Naive thymus-derived CD4-positive, alpha-beta T cell (primary cell): ENCODE measurements at regions of chr7 and their contacts with region 1.

Region 1: GRCh38 chr7:92447345-92448204 is at the start of gene GATAD1:
- DNase-seq: peak in 7 of 9 donors; percentile 64 to 87 (median 84)
- ATAC-seq: peak; percentile 89
- H3K4me3 ChIP-seq: peak within 1 kb of the TSS; percentile 63
- H3K4me3 Mint-ChIP-seq: peak within 1 kb of the TSS; percentile 81 to 97 (median 93)
- H3K27ac ChIP-seq: peak within 1 kb of the TSS; percentile 95
- H3K27ac Mint-ChIP-seq: peak within 1 kb of the TSS; percentile 95 to 99 (median 98)
- H3K4me1 ChIP-seq: peaks cover 9 to 14% of the 10 kb centered on the region in 2 donors
- H3K4me1 Mint-ChIP-seq: peaks cover 6 to 38% (median 17%) of the 10 kb centered on the region in 7 donors
- H3K27me3 ChIP-seq: no peaks in the 10 kb centered on the region
- H3K27me3 Mint-ChIP-seq: peaks cover 0 to 3% (median 0%) of the 10 kb centered on the region in 5 donors
- total RNA-seq, gene GATAD1: 16.4 to 34.7 (median 22.7) TPM

Region 2: GRCh38 chr7:91089382-91089963 is 1358.1 kb before region 1 on chr7:
- CTCF ChIA-PET with region 1: no interaction called
- POLR2A ChIA-PET with region 1: no interaction called
- intact Hi-C with region 1: loop called (anchors 5 kb)
- DNase-seq: peak in 6 of 9 donors; percentile 33 to 52 (median 38)
- ATAC-seq: peak; percentile 78
- H3K4me3 ChIP-seq: no peak overlapping the region
- H3K4me3 Mint-ChIP-seq: peak overlapping the region; percentile 2 to 71 (median 43)
- H3K27ac ChIP-seq: no peak overlapping the region
- H3K27ac Mint-ChIP-seq: peak overlapping the region in 4 of 9 donors; percentile 0 to 29 (median 12)
- H3K4me1 ChIP-seq: peaks cover 0 to 12% of the 10 kb centered on the region in 2 donors
- H3K4me1 Mint-ChIP-seq: peaks cover 14 to 36% (median 29%) of the 10 kb centered on the region in 7 donors
- H3K27me3 ChIP-seq: no peaks in the 10 kb centered on the region
- H3K27me3 Mint-ChIP-seq: peaks cover 0 to 9% (median 0%) of the 10 kb centered on the region in 5 donors

Region 3: GRCh38 chr7:91826377-91826776 is 621.2 kb before region 1 on chr7:
- CTCF ChIA-PET with region 1: interaction called, 3 read pairs
- POLR2A ChIA-PET with region 1: no interaction called
- intact Hi-C with region 1: loop called in 1 of 2 experiments (anchors 1 kb)
- DNase-seq: no peak
- ATAC-seq: no peak
- H3K4me3 ChIP-seq: no peak overlapping the region
- H3K4me3 Mint-ChIP-seq: no peak overlapping the region
- H3K27ac ChIP-seq: no peak overlapping the region
- H3K27ac Mint-ChIP-seq: no peak overlapping the region
- H3K4me1 ChIP-seq: no peaks in the 10 kb centered on the region
- H3K4me1 Mint-ChIP-seq: no peaks in the 10 kb centered on the region
- H3K27me3 ChIP-seq: no peaks in the 10 kb centered on the region
- H3K27me3 Mint-ChIP-seq: peaks cover 0 to 6% (median 0%) of the 10 kb centered on the region in 5 donors

Region 4: GRCh38 chr7:92134271-92135051 is 313.1 kb before region 1 on chr7 and contains the start of gene CYP51A1:
- CTCF ChIA-PET with region 1: no interaction called
- POLR2A ChIA-PET with region 1: interaction called, 6 read pairs
- intact Hi-C with region 1: loop called (anchors 1 kb)
- DNase-seq: peak; percentile 93 to 98 (median 96)
- ATAC-seq: peak; percentile 93
- H3K4me3 ChIP-seq: peak within 1 kb of the TSS; percentile 92
- H3K4me3 Mint-ChIP-seq: peak within 1 kb of the TSS; percentile 95 to 100 (median 98)
- H3K27ac ChIP-seq: peak within 1 kb of the TSS; percentile 94
- H3K27ac Mint-ChIP-seq: peak within 1 kb of the TSS; percentile 89 to 100 (median 99)
- H3K4me1 ChIP-seq: peaks cover 4 to 12% of the 10 kb centered on the region in 2 donors
- H3K4me1 Mint-ChIP-seq: peaks cover 12 to 49% (median 40%) of the 10 kb centered on the region in 7 donors
- H3K27me3 ChIP-seq: no peaks in the 10 kb centered on the region
- H3K27me3 Mint-ChIP-seq: peaks cover 0 to 2% (median 0%) of the 10 kb centered on the region in 5 donors
- total RNA-seq, gene CYP51A1: 14.7 to 36.6 (median 21.7) TPM

Region 5: GRCh38 chr7:92421676-92422435 is 25.7 kb before region 1 on chr7:
- CTCF ChIA-PET with region 1: interaction called, 41 read pairs
- POLR2A ChIA-PET with region 1: interaction called, 34 read pairs
- intact Hi-C with region 1: loop called (anchors 1 kb)
- DNase-seq: no peak
- ATAC-seq: no peak
- H3K4me3 ChIP-seq: no peak overlapping the region
- H3K4me3 Mint-ChIP-seq: no peak overlapping the region
- H3K27ac ChIP-seq: no peak overlapping the region
- H3K27ac Mint-ChIP-seq: no peak overlapping the region
- H3K4me1 ChIP-seq: peaks cover 0 to 6% of the 10 kb centered on the region in 2 donors
- H3K4me1 Mint-ChIP-seq: peaks cover 5 to 16% (median 11%) of the 10 kb centered on the region in 7 donors
- H3K27me3 ChIP-seq: no peaks in the 10 kb centered on the region
- H3K27me3 Mint-ChIP-seq: peaks cover 2 to 16% (median 9%) of the 10 kb centered on the region in 5 donors

Region 6: GRCh38 chr7:92590711-92591310 is 143.2 kb after region 1 on chr7:
- CTCF ChIA-PET with region 1: interaction called, 4 read pairs
- POLR2A ChIA-PET with region 1: interaction called, 3 read pairs
- intact Hi-C with region 1: loop called (anchors 1 to 5 kb)
- DNase-seq: peak in 1 of 9 donors; percentile 11
- ATAC-seq: no peak
- H3K4me3 ChIP-seq: peak overlapping the region; percentile 77
- H3K4me3 Mint-ChIP-seq: peak overlapping the region; percentile 90 to 96 (median 94)
- H3K27ac ChIP-seq: peak overlapping the region; percentile 94
- H3K27ac Mint-ChIP-seq: peak overlapping the region in 8 of 9 donors; percentile 22 to 96 (median 76)
- H3K4me1 ChIP-seq: peaks cover 14 to 21% of the 10 kb centered on the region in 2 donors
- H3K4me1 Mint-ChIP-seq: peaks cover 27 to 46% (median 39%) of the 10 kb centered on the region in 7 donors
- H3K27me3 ChIP-seq: no peaks in the 10 kb centered on the region
- H3K27me3 Mint-ChIP-seq: peaks cover 0 to 4% (median 0%) of the 10 kb centered on the region in 5 donors